Naive thymus-derived CD8-positive, alpha-beta T cell (primary cell): ENCODE measurements at regions of chr1 and their contacts with region 1.

Region 1: DNA sequence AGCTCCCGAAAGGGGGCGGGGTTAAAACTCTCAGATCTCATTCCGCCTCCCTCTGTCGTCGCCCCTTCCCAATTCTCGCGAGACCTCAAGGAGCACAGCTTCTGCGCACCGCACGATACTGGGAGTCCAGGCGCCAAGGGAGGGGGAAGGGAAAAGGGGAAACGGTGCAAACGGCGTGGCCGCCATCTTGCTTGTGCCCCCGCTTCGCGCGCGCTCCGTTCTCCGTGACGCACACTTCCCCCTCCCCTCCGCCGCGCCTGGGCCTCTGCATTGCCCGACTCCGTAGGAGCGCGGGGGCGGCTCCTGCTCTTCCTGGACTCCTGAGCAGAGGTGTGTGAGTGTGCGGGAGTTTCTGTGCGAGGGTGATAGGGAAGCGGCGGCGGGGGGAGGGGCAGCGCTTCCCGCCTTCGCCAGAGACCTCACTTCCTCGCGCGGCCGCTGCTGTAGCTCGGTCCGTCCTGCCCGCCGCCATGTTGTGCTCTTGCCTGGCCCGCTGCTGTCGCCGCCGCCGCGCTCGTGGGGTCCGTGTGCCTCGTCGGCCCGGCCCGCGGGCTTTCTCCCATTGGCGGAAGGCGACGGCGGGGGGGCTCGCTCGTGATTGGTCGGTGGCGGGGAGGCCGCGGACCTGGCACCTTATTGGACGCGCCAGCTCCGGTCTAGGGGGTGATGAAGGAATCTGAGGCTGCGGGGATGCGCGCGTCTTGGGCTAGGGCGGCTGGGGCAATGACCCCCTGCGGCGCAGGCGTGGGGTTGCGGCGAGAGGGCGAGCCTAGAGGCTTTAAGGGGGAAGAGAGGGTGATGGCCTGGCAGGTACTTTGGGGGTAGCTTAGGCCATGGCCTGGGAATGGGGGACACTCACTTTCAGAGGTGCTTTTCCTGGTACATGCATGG is at the start of gene NFYC:
- DNase-seq: peak; percentile 85 to 98 (median 96)
- ATAC-seq: peak; percentile 84 to 85
- H3K4me3 Mint-ChIP-seq: peak within 1 kb of the TSS; percentile 89 to 100 (median 96)
- H3K27ac Mint-ChIP-seq: peak within 1 kb of the TSS; percentile 92 to 99 (median 97)
- H3K4me1 Mint-ChIP-seq: peaks cover 30 to 70% (median 66%) of the 10 kb centered on the region in 4 donors
- H3K27me3 Mint-ChIP-seq: no peaks in the 10 kb centered on the region
- polyA plus RNA-seq, gene NFYC: 32.5 to 46.9 (median 33.3) TPM

Region 2: DNA sequence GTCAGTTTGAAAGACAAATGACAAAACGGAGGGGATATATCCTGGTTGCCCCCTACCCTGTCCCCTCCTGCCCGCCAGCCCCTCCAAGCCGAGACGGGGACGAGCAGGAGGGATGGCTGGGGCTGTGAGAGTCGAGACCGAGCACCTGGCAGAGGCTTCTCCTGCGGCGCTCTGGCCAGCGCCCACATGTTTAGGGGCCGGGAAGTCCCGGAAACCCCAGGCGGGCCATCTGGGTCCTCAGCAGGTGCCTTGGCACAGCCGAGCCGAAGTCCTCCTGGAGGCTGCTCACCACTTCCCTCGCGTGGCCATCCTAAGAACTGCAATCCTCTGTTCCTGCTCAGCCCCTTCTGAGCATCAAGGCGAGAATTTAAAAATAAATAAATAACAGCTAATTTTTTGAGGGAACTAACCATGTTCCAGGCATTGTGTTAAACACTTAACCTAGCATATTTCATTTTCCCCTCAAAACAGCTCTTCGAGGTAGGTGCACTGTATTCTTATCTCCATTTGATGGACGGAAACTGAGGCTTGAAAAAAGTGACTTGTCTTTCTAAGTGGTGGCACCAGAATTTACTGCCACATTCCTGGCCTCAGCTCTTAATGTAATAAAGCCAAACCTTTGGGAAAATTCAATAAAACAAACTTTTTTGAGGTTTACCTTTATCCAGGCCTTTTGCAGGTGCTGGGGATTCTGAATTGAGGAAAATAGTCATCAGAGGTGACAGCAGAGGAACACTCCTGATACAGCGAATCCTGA is 22.8 kb before region 1 on chr1:
- POLR2A ChIA-PET with region 1: interaction called, 19 read pairs
- DNase-seq: peak; percentile 68 to 88 (median 80)
- ATAC-seq: peak; percentile 59 to 65
- H3K4me3 Mint-ChIP-seq: peak overlapping the region in 9 of 10 donors; percentile 26 to 70 (median 55)
- H3K27ac Mint-ChIP-seq: peak overlapping the region in 2 of 10 donors; percentile 41 to 49
- H3K4me1 Mint-ChIP-seq: peaks cover 0 to 17% (median 17%) of the 10 kb centered on the region in 4 donors
- H3K27me3 Mint-ChIP-seq: peaks cover 0 to 7% (median 3%) of the 10 kb centered on the region in 5 donors

Region 3: GRCh38 chr1:40709100-40709801 is 17.5 kb after region 1 on chr1:
- POLR2A ChIA-PET with region 1: interaction called, 120 read pairs
- DNase-seq: peak in 9 of 10 donors; percentile 35 to 90 (median 82)
- ATAC-seq: peak; percentile 97 to 98
- H3K4me3 Mint-ChIP-seq: peak overlapping the region; percentile 90 to 99 (median 95)
- H3K27ac Mint-ChIP-seq: peak overlapping the region; percentile 92 to 99 (median 97)
- H3K4me1 Mint-ChIP-seq: peaks cover 26 to 81% (median 65%) of the 10 kb centered on the region in 4 donors
- H3K27me3 Mint-ChIP-seq: no peaks in the 10 kb centered on the region

Region 4: GRCh38 chr1:40732756-40733301 is 41.0 kb after region 1 on chr1:
- POLR2A ChIA-PET with region 1: interaction called, 11 read pairs
- DNase-seq: no peak
- ATAC-seq: no peak
- H3K4me3 Mint-ChIP-seq: no peak overlapping the region
- H3K27ac Mint-ChIP-seq: peak overlapping the region in 4 of 10 donors; percentile 4 to 72 (median 52)
- H3K4me1 Mint-ChIP-seq: peaks cover 29 to 61% (median 53%) of the 10 kb centered on the region in 4 donors
- H3K27me3 Mint-ChIP-seq: no peaks in the 10 kb centered on the region

Region 5: GRCh38 chr1:40755067-40755466 is 63.3 kb after region 1 on chr1:
- POLR2A ChIA-PET with region 1: no interaction called
- DNase-seq: no peak
- ATAC-seq: no peak
- H3K4me3 Mint-ChIP-seq: no peak overlapping the region
- H3K27ac Mint-ChIP-seq: no peak overlapping the region
- H3K4me1 Mint-ChIP-seq: peaks cover 0 to 3% (median 1%) of the 10 kb centered on the region in 4 donors
- H3K27me3 Mint-ChIP-seq: no peaks in the 10 kb centered on the region

Region 6: DNA sequence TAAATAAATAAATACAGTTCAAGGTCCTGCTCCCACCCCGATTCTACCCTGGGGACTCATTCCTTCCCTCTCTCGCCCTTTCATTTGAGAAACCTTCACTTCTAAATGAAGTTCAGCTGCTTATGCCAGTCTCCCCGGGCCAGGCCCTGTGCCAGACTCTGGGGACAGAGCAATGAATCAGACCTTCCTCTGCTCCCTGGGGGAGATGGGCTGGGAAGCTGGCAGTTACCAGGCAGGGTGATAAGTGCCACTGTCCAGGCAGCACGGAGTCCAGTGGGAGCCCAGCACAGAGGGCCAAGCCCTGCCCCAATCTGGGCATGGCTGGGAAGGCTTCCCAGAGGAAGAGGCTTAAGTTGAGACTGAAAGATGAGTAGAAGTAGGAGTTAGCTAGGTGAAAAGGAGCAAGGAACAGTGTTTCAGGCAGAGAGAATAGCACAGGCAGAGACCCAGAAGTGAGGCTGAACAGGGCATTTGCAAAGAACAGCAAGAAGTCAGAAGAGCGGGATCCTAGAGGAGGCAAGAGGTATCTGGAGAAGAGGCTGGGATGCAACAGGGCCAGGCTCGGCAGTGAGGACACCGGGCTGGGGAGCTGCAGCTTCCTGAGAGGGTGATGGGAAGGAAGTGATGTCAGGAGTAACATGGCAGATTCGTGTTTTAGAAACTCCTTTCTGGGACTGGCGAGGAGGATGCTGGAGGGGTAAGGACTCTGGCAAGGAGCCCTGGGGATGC is 105.3 kb after region 1 on chr1:
- POLR2A ChIA-PET with region 1: interaction called, 13 read pairs
- DNase-seq: no peak
- ATAC-seq: no peak
- H3K4me3 Mint-ChIP-seq: peak overlapping the region in 8 of 10 donors; percentile 11 to 70 (median 40)
- H3K27ac Mint-ChIP-seq: peak overlapping the region in 9 of 10 donors; percentile 11 to 94 (median 81)
- H3K4me1 Mint-ChIP-seq: peaks cover 31 to 70% (median 66%) of the 10 kb centered on the region in 4 donors
- H3K27me3 Mint-ChIP-seq: no peaks in the 10 kb centered on the region

Region 7: DNA sequence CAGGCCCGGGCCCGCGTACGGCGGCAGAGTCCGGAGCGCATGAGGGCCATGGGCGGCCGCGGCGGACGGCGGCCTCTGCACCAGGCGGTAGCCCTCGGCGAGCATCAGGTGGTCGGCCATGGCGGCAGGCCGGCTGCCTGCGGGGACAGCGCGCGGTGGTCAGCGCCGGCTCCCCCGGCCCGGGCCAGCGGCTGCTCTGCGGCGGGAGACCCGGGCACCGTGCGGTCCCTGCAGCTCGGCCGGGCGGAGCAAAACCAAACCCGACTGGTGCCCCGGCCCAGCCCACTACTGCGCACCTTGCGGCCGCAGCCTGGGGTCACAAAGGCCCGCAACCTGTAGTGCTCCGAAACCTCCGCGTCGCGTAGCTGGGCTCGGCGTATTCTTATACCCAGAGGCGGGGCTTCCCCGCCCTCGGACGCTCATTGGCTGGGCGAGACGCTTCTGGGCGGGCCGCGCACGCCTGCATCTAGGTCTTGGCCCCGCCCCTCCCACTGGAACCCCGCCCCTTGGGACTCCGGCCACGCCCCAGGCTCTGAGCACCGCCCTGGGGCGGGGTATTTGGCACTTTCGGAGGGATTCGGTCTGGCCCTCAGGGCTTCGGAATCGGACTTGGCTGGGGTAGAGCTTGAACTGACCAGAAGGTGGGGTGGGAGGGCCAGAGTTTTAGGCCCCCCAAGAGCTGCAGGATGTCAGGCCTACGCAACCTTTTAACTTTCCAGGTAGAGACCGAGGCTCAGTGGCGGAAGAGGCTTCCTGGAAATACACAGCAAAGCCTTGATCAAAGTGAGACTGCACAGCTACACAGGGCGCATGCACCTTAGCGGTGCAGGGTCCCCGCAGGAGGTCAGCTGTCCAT is 170.5 kb after region 1 on chr1 and contains the start of gene CITED4:
- POLR2A ChIA-PET with region 1: interaction called, 44 read pairs
- DNase-seq: peak; percentile 93 to 98 (median 96)
- ATAC-seq: peak; percentile 93 to 95
- H3K4me3 Mint-ChIP-seq: peak within 1 kb of the TSS; percentile 92 to 98 (median 96)
- H3K27ac Mint-ChIP-seq: peak within 1 kb of the TSS; percentile 92 to 99 (median 99)
- H3K4me1 Mint-ChIP-seq: peaks cover 11 to 20% (median 19%) of the 10 kb centered on the region in 4 donors
- H3K27me3 Mint-ChIP-seq: peaks cover 0 to 7% (median 0%) of the 10 kb centered on the region in 5 donors
- polyA plus RNA-seq, gene CITED4: 24.5 to 45.4 (median 27.4) TPM

Region 8: DNA sequence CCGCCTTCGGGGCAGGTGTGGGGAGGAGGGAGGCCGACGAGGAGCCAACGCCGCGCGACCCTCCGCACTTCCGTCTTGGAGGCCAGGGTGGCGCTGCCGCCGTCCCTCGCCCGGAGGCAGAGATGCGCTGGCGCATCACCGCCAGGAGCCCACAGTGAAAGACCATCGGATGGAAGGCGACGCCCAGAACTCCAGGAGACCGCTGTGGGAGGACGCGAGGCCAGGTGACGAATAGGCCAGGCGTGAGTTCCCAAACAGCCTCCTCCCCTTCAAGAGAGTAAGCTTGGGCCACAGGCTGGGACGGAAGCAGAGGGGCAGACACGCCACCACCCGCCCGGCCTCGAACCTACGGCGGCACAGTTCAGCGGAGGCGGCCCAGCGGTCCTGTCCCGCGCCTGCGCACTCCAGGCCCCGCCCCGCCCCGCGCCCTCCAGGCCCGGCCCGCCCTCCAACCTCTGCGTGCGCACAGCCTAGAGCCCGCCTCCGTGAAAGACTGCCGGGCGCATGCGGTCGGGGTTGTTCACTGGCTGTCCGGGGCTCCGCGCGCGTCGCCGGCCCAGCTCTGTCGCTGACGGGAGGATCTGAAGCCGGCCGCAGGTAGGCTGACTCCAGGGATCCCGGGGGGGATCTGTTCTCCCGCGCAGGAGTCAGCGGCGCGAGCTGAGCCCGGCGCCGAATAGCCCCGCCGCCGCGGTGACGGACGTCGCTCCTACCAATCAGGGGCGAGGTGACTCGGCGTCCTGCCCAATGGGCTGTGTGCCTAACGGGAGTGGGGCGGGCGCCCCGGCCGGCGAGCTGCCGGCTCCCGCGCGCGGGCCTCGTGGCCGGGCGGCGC is 287.7 kb after region 1 on chr1 and contains the start of gene CTPS1:
- POLR2A ChIA-PET with region 1: interaction called, 10 read pairs
- DNase-seq: peak; percentile 89 to 98 (median 96)
- ATAC-seq: peak; percentile 88 to 89
- H3K4me3 Mint-ChIP-seq: peak within 1 kb of the TSS; percentile 81 to 99 (median 96)
- H3K27ac Mint-ChIP-seq: peak within 1 kb of the TSS; percentile 83 to 99 (median 98)
- H3K4me1 Mint-ChIP-seq: peaks cover 23 to 37% (median 24%) of the 10 kb centered on the region in 4 donors
- H3K27me3 Mint-ChIP-seq: no peaks in the 10 kb centered on the region
- polyA plus RNA-seq, gene CTPS1: 12.7 to 21.3 (median 19.0) TPM